ENCODE measurements at regions of chr6 and their contacts with region 1.

Region 1: GRCh38 chr6:99151634-99152344 is 197.7 kb downstream of the FAXC start:
- DNase-seq: peak; percentile 4
- ATAC-seq: peak; percentile 99
- H3K4me3 ChIP-seq: no peak overlapping the region
- H3K27ac ChIP-seq: no peak overlapping the region
- H3K4me1 ChIP-seq: no peaks in the 10 kb centered on the region
- H3K27me3 ChIP-seq: no peaks in the 10 kb centered on the region; a peak in 1 of 4 replicates
- CTCF ChIP-seq: peak; percentile 72 to 81 (median 78)
- EP300 ChIP-seq: no peak
- POLR2A ChIP-seq: no peak
- RAD21 ChIP-seq: peak; percentile 63

Region 2: DNA sequence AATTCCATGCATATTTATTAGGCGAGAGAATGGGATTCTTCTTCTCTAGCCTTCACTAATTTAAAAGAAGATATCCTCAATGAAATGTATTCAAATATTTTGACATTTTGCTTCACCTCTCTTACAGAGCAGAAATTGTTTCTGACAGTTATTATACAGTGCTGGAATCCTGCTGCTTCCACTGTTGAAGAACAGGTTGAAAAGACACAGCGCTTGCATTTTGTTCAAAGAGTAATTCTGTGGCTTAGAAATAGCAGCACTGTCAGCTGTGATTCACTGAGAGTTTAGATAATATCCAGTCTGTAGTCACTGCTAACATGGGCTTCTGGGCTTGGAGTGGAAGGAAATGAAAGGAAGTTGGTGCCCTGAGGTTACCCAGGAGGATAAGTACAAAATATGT is 87.0 kb before region 1 on chr6:
- CTCF ChIA-PET with region 1: no interaction called
- POLR2A ChIA-PET with region 1: no interaction called
- RAD21 ChIA-PET with region 1: no interaction called
- SMC1A ChIA-PET with region 1: no interaction called
- in situ Hi-C with region 1: no loop called
- intact Hi-C with region 1: no loop called
- DNase-seq: no peak
- ATAC-seq: no peak
- H3K4me3 ChIP-seq: no peak overlapping the region
- H3K27ac ChIP-seq: no peak overlapping the region
- H3K4me1 ChIP-seq: no peaks in the 10 kb centered on the region
- H3K27me3 ChIP-seq: no peaks in the 10 kb centered on the region; a peak in 1 of 4 replicates
- CTCF ChIP-seq: no peak
- EP300 ChIP-seq: no peak
- POLR2A ChIP-seq: no peak
- RAD21 ChIP-seq: no peak

Region 3: GRCh38 chr6:99165838-99166237 is 14.0 kb after region 1 on chr6:
- CTCF ChIA-PET with region 1: interaction called, 16 read pairs
- POLR2A ChIA-PET with region 1: no interaction called
- RAD21 ChIA-PET with region 1: interaction called, 4 read pairs
- SMC1A ChIA-PET with region 1: interaction called, 4 read pairs
- in situ Hi-C with region 1: no loop called
- intact Hi-C with region 1: no loop called
- DNase-seq: no peak
- ATAC-seq: peak; percentile 44; the same call in 2 of the 3 replicates
- H3K4me3 ChIP-seq: no peak overlapping the region
- H3K27ac ChIP-seq: no peak overlapping the region
- H3K4me1 ChIP-seq: no peaks in the 10 kb centered on the region
- H3K27me3 ChIP-seq: no peaks in the 10 kb centered on the region; a peak in 1 of 4 replicates
- CTCF ChIP-seq: no peak
- EP300 ChIP-seq: no peak
- POLR2A ChIP-seq: no peak
- RAD21 ChIP-seq: no peak

Region 4: GRCh38 chr6:99219788-99220187 is 68.0 kb after region 1 on chr6:
- CTCF ChIA-PET with region 1: interaction called, 11 read pairs
- POLR2A ChIA-PET with region 1: no interaction called
- RAD21 ChIA-PET with region 1: no interaction called
- SMC1A ChIA-PET with region 1: interaction called, 3 read pairs
- in situ Hi-C with region 1: no loop called
- intact Hi-C with region 1: loop called (anchors 2 kb)
- DNase-seq: no peak
- ATAC-seq: peak; percentile 94
- H3K4me3 ChIP-seq: no peak overlapping the region
- H3K27ac ChIP-seq: no peak overlapping the region
- H3K4me1 ChIP-seq: no peaks in the 10 kb centered on the region
- H3K27me3 ChIP-seq: no peaks in the 10 kb centered on the region
- CTCF ChIP-seq: peak; percentile 28 to 45 (median 44); a peak in 4 of 6 replicates
- EP300 ChIP-seq: no peak
- POLR2A ChIP-seq: no peak
- RAD21 ChIP-seq: peak; percentile 18; the same call in 1 of the 2 replicates

Region 5: GRCh38 chr6:99241905-99242534 is 90.2 kb after region 1 on chr6:
- CTCF ChIA-PET with region 1: interaction called, 110 read pairs
- POLR2A ChIA-PET with region 1: no interaction called
- RAD21 ChIA-PET with region 1: interaction called, 12 read pairs
- SMC1A ChIA-PET with region 1: interaction called, 21 read pairs
- in situ Hi-C with region 1: loop called (anchors 10 kb)
- intact Hi-C with region 1: loop called (anchors 1 kb)
- DNase-seq: no peak
- ATAC-seq: peak; percentile 35; the same call in 2 of the 3 replicates
- H3K4me3 ChIP-seq: no peak overlapping the region
- H3K27ac ChIP-seq: no peak overlapping the region
- H3K4me1 ChIP-seq: no peaks in the 10 kb centered on the region
- H3K27me3 ChIP-seq: no peaks in the 10 kb centered on the region; a peak in 1 of 4 replicates
- CTCF ChIP-seq: peak; percentile 44 to 54 (median 46); a peak in 5 of 6 replicates
- EP300 ChIP-seq: no peak
- POLR2A ChIP-seq: no peak
- RAD21 ChIP-seq: peak; percentile 60